K562 (cell line): ENCODE measurements at regions of chr5 and their contacts with region 1.

Region 1: GRCh38 chr5:170183816-170184687 is 48.7 kb upstream of the C5orf58 start:
- DNase-seq: peak; percentile 54 to 74 (median 69)
- ATAC-seq: peak; percentile 98
- H3K4me3 ChIP-seq: no peak overlapping the region
- H3K27ac ChIP-seq: no peak overlapping the region
- H3K4me1 ChIP-seq: no peaks in the 10 kb centered on the region
- H3K27me3 ChIP-seq: peaks cover 9 to 44% of the 10 kb centered on the region in 2 experiments; a peak in 4 of 5 replicates
- CTCF ChIP-seq: peak; percentile 81 to 91 (median 89)
- EP300 ChIP-seq: no peak
- POLR2A ChIP-seq: no peak
- RAD21 ChIP-seq: peak; percentile 79 to 92

Region 2: DNA sequence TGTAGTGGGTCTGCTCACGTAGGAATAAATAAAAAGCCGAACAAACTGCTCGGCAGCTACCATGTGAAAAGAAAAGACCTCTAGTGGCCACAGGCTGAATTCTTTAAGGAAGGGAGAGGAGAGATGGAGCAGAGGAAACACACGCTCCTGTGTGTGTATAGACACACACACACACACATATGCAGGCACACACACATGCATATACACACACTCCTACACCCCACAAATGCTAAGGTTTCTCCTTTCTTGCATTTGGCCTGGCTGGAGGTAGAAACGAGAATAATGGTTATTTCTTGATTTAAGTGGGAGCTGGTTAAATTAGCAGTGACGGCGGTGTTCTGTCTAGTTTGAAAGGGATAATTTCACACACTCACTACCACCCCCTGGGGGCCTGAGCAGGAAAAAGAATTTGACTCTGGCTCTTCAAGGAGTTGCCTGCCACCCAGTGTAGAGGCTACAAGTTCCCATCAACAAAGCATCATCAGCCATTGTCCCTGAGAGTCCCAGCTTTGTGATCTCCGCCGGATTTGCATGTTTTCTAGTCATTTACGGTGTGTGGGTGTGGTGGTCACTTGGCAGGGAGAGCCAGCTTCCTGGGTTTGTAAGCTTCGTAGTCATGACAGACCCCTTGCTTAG is 203.5 kb before region 1 on chr5 and contains the start of gene INSYN2B:
- CTCF ChIA-PET with region 1: interaction called, 3 read pairs
- POLR2A ChIA-PET with region 1: no interaction called
- in situ Hi-C with region 1: no loop called
- intact Hi-C with region 1: loop called (anchors 10 kb)
- DNase-seq: peak; percentile 65 to 71 (median 68)
- ATAC-seq: peak; percentile 97
- H3K4me3 ChIP-seq: no peak within 1 kb of the TSS
- H3K27ac ChIP-seq: no peak within 1 kb of the TSS
- H3K4me1 ChIP-seq: no peaks in the 10 kb centered on the region; a peak in 1 of 5 replicates
- H3K27me3 ChIP-seq: no peaks in the 10 kb centered on the region; a peak in 1 of 5 replicates
- CTCF ChIP-seq: peak; percentile 67 to 98 (median 84)
- EP300 ChIP-seq: no peak
- POLR2A ChIP-seq: no peak
- RAD21 ChIP-seq: peak; percentile 42 to 75
- polyA plus RNA-seq, gene INSYN2B: not detected

Region 3: GRCh38 chr5:170028124-170028523 is 155.9 kb before region 1 on chr5:
- CTCF ChIA-PET with region 1: no interaction called
- POLR2A ChIA-PET with region 1: no interaction called
- in situ Hi-C with region 1: no loop called
- intact Hi-C with region 1: no loop called
- DNase-seq: no peak
- ATAC-seq: no peak
- H3K4me3 ChIP-seq: no peak overlapping the region
- H3K27ac ChIP-seq: no peak overlapping the region
- H3K4me1 ChIP-seq: no peaks in the 10 kb centered on the region
- H3K27me3 ChIP-seq: peaks cover 0 to 3% of the 10 kb centered on the region in 2 experiments; a peak in 2 of 5 replicates
- CTCF ChIP-seq: no peak
- EP300 ChIP-seq: no peak
- POLR2A ChIP-seq: no peak
- RAD21 ChIP-seq: no peak

Region 4: GRCh38 chr5:170144286-170145023 is 39.6 kb before region 1 on chr5:
- CTCF ChIA-PET with region 1: no interaction called
- POLR2A ChIA-PET with region 1: no interaction called
- in situ Hi-C with region 1: no loop called
- intact Hi-C with region 1: no loop called
- DNase-seq: no peak
- ATAC-seq: no peak
- H3K4me3 ChIP-seq: no peak overlapping the region
- H3K27ac ChIP-seq: no peak overlapping the region
- H3K4me1 ChIP-seq: peaks cover 8 to 9% of the 10 kb centered on the region in 2 experiments
- H3K27me3 ChIP-seq: peaks cover 4 to 48% of the 10 kb centered on the region in 2 experiments
- CTCF ChIP-seq: no peak
- EP300 ChIP-seq: no peak
- POLR2A ChIP-seq: no peak
- RAD21 ChIP-seq: no peak

Region 5: DNA sequence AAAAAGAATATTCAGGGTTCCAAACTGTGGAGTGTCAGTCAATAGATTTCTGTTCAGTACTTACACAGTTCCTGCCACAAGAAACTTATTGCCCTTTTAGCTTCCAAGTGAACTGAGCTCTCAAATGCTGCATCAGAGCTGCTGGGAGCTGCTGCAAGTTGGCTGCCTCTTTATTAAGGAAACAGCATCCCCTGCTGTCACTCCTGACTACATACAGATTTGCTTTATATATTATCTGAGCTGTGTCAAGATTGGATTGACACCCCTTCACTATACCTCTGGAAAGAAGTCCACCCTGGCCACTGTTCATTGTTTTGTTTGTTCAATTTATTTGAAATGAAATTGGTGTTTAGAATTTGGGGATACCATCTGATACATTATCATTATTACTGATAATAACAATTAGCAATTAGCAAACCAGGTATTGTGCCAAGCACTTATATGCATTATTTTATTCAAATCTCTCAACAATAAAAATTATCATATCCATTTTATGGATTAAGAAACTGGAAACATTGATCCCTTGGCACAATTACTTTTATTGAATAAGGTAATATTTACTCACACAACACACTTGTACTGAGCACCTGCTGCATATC is 32.3 kb after region 1 on chr5:
- CTCF ChIA-PET with region 1: no interaction called
- POLR2A ChIA-PET with region 1: no interaction called
- in situ Hi-C with region 1: no loop called
- intact Hi-C with region 1: loop called (anchors 2 kb)
- DNase-seq: peak; percentile 17 to 53 (median 38)
- ATAC-seq: peak; percentile 78
- H3K4me3 ChIP-seq: no peak overlapping the region
- H3K27ac ChIP-seq: no peak overlapping the region
- H3K4me1 ChIP-seq: no peaks in the 10 kb centered on the region
- H3K27me3 ChIP-seq: peaks cover 0 to 5% of the 10 kb centered on the region in 2 experiments; a peak in 2 of 5 replicates
- CTCF ChIP-seq: peak; percentile 68 to 91 (median 69)
- EP300 ChIP-seq: no peak
- POLR2A ChIP-seq: no peak
- RAD21 ChIP-seq: peak; percentile 96 to 97

Region 6: GRCh38 chr5:170673196-170673595 is 489.1 kb after region 1 on chr5:
- CTCF ChIA-PET with region 1: no interaction called
- POLR2A ChIA-PET with region 1: no interaction called
- in situ Hi-C with region 1: no loop called
- intact Hi-C with region 1: no loop called
- DNase-seq: no peak
- ATAC-seq: no peak
- H3K4me3 ChIP-seq: no peak overlapping the region
- H3K27ac ChIP-seq: no peak overlapping the region
- H3K4me1 ChIP-seq: no peaks in the 10 kb centered on the region
- H3K27me3 ChIP-seq: no peaks in the 10 kb centered on the region
- CTCF ChIP-seq: no peak
- EP300 ChIP-seq: no peak
- POLR2A ChIP-seq: no peak
- RAD21 ChIP-seq: no peak